Activated T-helper 1 cell treated with anti-CD3 and anti-CD28 coated beads, Interleukin-12 subunit alpha, Interleukin-12 subunit beta, Interleukin-2, Interleukin-4 antibody, amounts not matched to agents 30 ng/mL and 10 ng/mL and 1 ng/mL, durations not matched to agents 14 hours and 24 hours and 36 hours (primary cell): ENCODE measurements at regions of chr10 and their contacts with region 1.

Region 1: GRCh38 chr10:108544494-108545120 is 1378.7 kb downstream of the XPNPEP1 start:
- DNase-seq: peak; percentile 5
- H3K4me3 Mint-ChIP-seq: no peak overlapping the region
- H3K27ac Mint-ChIP-seq: no peak overlapping the region
- H3K4me1 Mint-ChIP-seq: no peaks in the 10 kb centered on the region
- H3K27me3 Mint-ChIP-seq: peaks cover 2% of the 10 kb centered on the region

Region 2: GRCh38 chr10:106625751-106626150 is 1918.9 kb before region 1 on chr10:
- intact Hi-C with region 1: loop called (anchors 10 kb)
- DNase-seq: no peak
- H3K4me3 Mint-ChIP-seq: no peak overlapping the region
- H3K27ac Mint-ChIP-seq: no peak overlapping the region
- H3K4me1 Mint-ChIP-seq: no peaks in the 10 kb centered on the region
- H3K27me3 Mint-ChIP-seq: no peaks in the 10 kb centered on the region

Region 3: GRCh38 chr10:108358912-108359311 is 185.7 kb before region 1 on chr10:
- intact Hi-C with region 1: no loop called
- DNase-seq: no peak
- H3K4me3 Mint-ChIP-seq: no peak overlapping the region
- H3K27ac Mint-ChIP-seq: no peak overlapping the region
- H3K4me1 Mint-ChIP-seq: no peaks in the 10 kb centered on the region
- H3K27me3 Mint-ChIP-seq: no peaks in the 10 kb centered on the region

Region 4: GRCh38 chr10:108721882-108722281 is 177.3 kb after region 1 on chr10:
- intact Hi-C with region 1: no loop called
- DNase-seq: no peak
- H3K4me3 Mint-ChIP-seq: no peak overlapping the region
- H3K27ac Mint-ChIP-seq: no peak overlapping the region
- H3K4me1 Mint-ChIP-seq: no peaks in the 10 kb centered on the region
- H3K27me3 Mint-ChIP-seq: no peaks in the 10 kb centered on the region

Region 5: GRCh38 chr10:109852475-109853037 is 1307.9 kb after region 1 on chr10:
- intact Hi-C with region 1: loop called (anchors 5 kb)
- DNase-seq: peak; percentile 55
- H3K4me3 Mint-ChIP-seq: no peak overlapping the region
- H3K27ac Mint-ChIP-seq: no peak overlapping the region
- H3K4me1 Mint-ChIP-seq: peaks cover 16% of the 10 kb centered on the region
- H3K27me3 Mint-ChIP-seq: peaks cover 3% of the 10 kb centered on the region